Activated T-helper 1 cell treated with anti-CD3 and anti-CD28 coated beads, Interleukin-12 subunit alpha, Interleukin-12 subunit beta, Interleukin-2, Interleukin-4 antibody, amounts not matched to agents 30 ng/mL and 10 ng/mL and 1 ng/mL, durations not matched to agents 14 hours and 24 hours and 36 hours (primary cell): ENCODE measurements at regions of chr16 and their contacts with region 1.

Region 1: GRCh38 chr16:58129097-58129936 is at the start of gene CFAP20:
- DNase-seq: peak; percentile 96
- H3K4me3 Mint-ChIP-seq: peak within 1 kb of the TSS; percentile 84
- H3K27ac Mint-ChIP-seq: peak within 1 kb of the TSS; percentile 83
- H3K4me1 Mint-ChIP-seq: peaks cover 32% of the 10 kb centered on the region
- H3K27me3 Mint-ChIP-seq: no peaks in the 10 kb centered on the region
- total RNA-seq, gene CFAP20: 64.9 and 65.2 TPM in 2 replicates

Region 2: DNA sequence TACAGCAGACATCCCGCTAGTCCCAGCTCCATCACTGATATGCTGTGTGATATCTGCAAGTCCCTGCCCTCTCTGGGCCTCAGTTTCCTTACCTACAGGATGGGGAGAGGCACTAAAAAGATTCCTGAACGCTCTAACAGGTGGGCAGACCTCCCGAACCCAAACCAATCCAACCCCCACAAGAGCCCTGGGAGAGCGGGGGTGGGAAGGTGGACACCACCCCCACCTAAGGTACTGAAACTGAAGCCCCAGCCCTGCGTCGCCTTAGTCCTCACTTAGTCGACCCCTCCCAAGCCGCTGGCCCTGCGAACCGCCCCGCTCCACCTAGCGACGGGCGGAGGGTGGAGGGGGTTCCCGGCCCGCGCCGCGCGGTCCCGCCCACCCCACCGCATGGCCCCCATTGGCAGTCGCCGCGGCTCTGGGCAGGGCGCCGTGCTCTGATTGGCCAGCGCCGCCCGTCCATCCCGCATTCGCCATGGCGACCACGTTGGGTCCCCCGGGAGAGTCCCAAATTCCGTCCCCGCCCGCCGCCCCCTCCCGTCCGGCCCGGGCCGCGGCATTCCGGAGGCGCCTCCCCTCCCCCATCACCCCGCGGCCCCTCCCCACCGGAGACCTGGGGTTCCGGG is 593.5 kb before region 1 on chr16:
- intact Hi-C with region 1: loop called (anchors 5 kb)
- DNase-seq: peak; percentile 92
- H3K4me3 Mint-ChIP-seq: peak overlapping the region; percentile 78
- H3K27ac Mint-ChIP-seq: peak overlapping the region; percentile 93
- H3K4me1 Mint-ChIP-seq: peaks cover 62% of the 10 kb centered on the region
- H3K27me3 Mint-ChIP-seq: no peaks in the 10 kb centered on the region

Region 3: DNA sequence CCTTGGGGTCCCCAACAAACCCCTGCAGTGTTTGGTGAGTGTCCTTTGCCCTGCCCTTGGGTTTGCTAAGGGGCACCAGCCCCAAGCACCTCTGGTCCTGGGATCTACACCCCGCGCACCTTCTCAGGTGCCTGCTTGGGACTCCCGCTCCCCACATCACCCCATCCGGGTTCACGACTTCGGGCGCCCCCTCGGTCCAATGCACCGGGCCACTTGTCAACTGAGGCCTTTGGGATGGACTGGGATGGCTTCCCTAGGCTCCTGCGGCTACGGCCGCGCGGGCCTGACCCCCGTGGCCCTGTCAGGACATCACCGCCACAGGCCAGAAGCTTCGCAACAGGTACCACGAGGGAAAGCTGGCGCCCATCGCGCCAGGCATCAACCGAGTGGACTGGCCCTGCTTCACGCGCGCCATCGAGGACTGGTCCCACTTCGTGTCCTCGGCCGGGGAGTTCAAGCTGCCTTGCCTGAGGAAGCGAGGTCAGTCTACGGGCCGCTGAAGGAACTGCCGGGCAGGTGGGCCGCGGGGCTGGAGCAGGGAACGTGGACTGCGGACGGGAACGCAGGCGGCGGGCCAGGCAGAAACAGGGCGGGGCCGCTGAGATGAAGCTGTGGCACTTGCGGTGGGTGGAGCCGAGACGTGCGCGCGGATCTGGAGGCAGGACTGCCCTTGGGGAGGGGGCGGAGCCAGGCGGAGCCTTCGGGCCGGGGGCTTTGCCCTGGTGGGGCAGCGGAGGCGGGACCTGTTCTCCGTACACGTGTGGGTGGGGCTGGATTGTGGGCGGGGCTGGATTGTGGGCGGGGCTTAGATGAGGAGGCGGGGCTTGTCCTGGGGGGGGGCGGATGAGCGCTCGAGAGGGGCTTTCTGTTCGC is 144.8 kb before region 1 on chr16:
- intact Hi-C with region 1: loop called (anchors 1 kb)
- DNase-seq: peak; percentile 89
- H3K4me3 Mint-ChIP-seq: peak overlapping the region; percentile 85
- H3K27ac Mint-ChIP-seq: no peak overlapping the region
- H3K4me1 Mint-ChIP-seq: no peaks in the 10 kb centered on the region
- H3K27me3 Mint-ChIP-seq: peaks cover 11% of the 10 kb centered on the region

Region 4: DNA sequence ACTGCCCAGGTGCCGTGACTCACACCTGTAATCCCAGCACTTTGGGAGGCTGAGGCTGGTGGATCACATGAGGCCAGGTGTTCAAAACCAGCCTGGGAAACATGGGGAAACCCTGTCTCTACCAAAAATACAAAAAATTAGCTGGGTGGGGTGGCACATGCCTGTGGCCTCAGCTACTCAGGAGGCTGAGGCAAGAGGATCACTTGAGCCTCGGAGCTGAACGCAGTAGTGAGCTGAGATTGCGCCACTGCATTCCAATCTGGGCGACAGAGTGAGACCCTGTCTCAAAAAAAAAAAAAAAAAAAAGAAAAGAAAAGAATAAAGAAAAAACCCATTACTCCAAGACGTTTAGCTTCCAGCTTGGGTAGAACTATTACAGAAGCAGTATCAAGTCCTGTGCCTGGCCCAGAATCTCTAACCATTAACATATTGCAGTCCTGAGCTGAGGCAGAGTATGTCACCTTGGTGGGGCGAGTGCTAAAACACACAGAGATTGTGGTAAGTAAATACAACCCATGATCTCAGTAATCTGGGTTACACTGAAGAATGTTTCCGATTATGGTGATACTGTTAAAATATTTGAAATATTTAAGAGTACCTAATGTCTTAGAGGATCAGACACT is 23.0 kb after region 1 on chr16:
- intact Hi-C with region 1: no loop called
- DNase-seq: no peak
- H3K4me3 Mint-ChIP-seq: no peak overlapping the region
- H3K27ac Mint-ChIP-seq: no peak overlapping the region
- H3K4me1 Mint-ChIP-seq: peaks cover 5% of the 10 kb centered on the region
- H3K27me3 Mint-ChIP-seq: no peaks in the 10 kb centered on the region

Region 5: GRCh38 chr16:58176608-58177352 is 47.5 kb after region 1 on chr16:
- intact Hi-C with region 1: loop called (anchors 5 kb)
- DNase-seq: no peak
- H3K4me3 Mint-ChIP-seq: peak overlapping the region; percentile 9
- H3K27ac Mint-ChIP-seq: peak overlapping the region; percentile 84
- H3K4me1 Mint-ChIP-seq: peaks cover 36% of the 10 kb centered on the region
- H3K27me3 Mint-ChIP-seq: no peaks in the 10 kb centered on the region

Region 6: DNA sequence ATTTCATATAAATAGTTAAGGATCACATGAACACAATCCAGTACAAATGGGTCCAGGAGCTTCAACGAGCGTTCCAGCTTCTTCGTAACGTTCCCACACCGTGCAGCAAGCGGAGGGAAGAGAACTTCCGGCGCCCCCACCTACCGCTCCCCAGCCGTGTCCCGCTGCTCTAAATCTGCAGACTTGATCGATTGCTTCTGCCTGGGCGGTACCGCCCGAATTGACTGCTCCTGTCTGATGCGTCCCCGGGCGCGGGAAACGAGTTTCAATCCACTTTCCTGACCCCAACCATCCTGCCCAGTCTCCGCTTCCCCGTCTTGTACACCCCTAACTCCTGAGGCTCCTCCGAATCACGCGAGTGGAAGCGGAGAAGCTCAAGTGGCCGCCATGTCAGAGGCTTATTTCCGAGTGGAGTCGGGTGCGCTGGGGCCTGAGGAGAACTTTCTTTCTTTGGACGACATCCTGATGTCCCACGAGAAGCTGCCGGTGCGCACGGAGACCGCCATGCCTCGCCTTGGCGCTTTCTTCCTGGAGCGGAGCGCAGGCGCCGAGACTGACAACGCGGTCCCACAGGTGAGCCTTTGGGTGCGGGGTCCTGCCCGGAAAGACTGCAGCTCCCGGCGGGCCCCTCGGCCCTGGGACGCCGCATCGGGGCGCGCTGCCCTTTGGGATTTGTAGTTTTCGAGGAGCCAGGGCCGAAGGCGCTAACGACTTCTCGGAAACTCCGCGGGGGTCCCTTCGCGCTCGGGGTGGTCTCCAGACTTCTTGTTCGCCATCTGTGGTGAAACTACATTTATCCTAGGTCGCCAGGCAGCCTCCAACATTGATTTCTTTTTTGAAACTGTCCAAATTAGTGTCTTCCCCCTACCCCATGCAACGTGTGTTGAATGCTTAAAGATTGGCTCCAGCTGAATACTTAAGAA is 263.2 kb after region 1 on chr16 and contains the start of gene GINS3:
- intact Hi-C with region 1: loop called (anchors 2 kb)
- DNase-seq: peak; percentile 82
- H3K4me3 Mint-ChIP-seq: peak within 1 kb of the TSS; percentile 95
- H3K27ac Mint-ChIP-seq: peak within 1 kb of the TSS; percentile 95
- H3K4me1 Mint-ChIP-seq: peaks cover 21% of the 10 kb centered on the region
- H3K27me3 Mint-ChIP-seq: peaks cover 11% of the 10 kb centered on the region
- total RNA-seq, gene GINS3: 23.8 and 25.3 TPM in 2 replicates

Region 7: DNA sequence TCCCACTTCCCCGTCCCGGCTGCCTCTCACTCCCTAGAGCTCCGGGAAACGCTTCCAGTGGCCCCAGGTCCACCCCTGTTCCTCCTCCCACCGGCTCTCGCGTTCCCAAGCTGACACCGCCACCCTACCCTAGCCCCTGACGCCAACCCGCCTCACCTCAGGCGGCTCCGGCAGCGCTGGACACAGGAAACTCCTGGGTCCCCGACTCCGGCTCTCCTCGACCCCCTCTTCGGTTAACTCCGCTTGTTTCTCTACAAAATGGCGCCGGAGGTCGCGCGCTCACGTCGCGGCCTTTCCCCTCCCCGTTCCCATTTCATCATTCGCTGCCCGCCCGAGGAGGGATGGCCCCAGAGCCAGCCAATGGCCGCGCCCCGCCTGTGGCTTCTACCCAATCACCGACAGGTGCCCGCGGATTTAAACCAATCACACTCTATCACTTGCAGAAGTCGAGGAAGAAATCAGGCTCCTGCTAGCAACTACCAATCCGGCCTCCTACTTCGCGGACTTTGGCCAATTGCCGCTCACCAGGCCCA is 500.3 kb after region 1 on chr16 and contains the start of gene CNOT1:
- intact Hi-C with region 1: loop called (anchors 1 kb)
- DNase-seq: peak; percentile 99
- H3K4me3 Mint-ChIP-seq: peak within 1 kb of the TSS; percentile 94
- H3K27ac Mint-ChIP-seq: peak within 1 kb of the TSS; percentile 100
- H3K4me1 Mint-ChIP-seq: peaks cover 29% of the 10 kb centered on the region
- H3K27me3 Mint-ChIP-seq: no peaks in the 10 kb centered on the region
- total RNA-seq, gene CNOT1: 270 and 272 TPM in 2 replicates